Common myeloid progenitor, CD34-positive (primary cell): ENCODE measurements at regions of chr10 and their contacts with region 1.

Region 1: DNA sequence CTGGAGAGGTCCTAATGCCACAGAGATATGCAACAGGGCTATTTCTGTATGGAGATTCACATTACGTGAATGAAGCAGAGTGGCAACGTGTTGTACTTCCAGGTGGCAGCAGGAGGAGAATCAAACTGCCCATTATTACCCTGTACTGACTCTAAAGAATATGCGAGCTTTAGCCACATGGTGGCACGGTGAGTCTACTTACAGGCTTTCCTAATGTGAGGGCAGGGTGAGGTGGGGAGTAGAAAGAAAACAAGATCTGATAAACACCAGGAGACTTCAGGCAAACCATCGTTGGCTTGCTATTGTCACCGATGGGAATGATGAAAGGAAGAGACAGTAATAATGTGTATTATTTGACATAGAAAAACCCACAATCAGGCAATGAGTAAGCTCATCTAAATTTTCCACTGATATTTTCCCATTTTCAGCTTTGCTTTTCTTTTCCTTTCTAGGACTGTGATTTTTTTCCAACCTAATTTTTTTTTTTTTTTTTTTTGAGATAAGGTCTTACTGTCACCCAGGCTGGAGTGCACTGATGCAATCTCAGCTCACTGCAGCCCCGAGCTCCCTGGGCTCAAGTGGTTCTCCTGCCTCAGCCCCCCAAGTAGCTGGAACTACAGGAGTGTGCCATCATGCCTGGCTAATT is 164.3 kb downstream of the BTAF1 start:
- DNase-seq: peak; percentile 87 to 93 (median 93)
- H3K4me3 ChIP-seq: no peak overlapping the region
- H3K27ac ChIP-seq: no peak overlapping the region
- H3K4me1 ChIP-seq: no peaks in the 10 kb centered on the region
- H3K27me3 ChIP-seq: no peaks in the 10 kb centered on the region

Region 2: DNA sequence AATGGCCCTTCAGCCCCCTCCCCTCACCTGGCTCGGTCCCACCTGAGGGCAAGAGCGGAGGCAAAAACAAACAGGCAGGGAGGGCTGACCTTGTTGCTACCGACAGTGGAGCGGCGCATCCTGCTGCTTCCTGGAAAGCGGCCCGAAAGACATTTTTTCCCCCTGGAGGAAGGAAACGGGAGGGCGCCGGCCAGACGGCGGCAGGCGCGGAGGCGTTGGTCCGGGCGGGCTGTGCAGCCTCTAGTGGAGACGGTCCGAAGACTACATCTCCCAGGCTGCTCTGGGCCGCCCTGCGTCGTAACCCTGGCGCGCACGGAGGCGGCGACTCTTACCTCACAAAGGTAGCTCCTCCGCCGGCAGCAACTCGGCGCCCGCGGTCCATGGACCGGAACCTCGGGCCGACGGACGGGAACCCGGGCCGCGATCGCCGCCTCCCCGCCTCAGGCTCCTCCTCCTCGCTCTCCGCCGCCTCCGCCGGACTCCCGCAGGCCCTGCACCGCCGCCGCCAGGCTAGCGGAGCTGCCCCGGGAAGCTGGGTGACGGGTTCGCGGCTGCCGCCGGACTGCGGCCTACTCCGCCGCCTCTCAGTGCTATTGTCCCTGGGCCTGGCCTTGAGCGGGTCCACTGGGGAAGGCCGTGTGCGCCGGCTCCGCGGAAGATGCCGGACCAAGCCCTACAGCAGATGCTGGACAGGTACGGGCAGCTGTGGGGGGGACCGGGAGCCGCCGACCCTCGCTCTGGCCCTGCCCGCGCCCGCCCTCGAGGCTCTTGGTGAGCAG is 203.2 kb after region 1 on chr10 and contains the starts of genes CPEB3 and MARCHF5:
- CTCF ChIA-PET with region 1: interaction called, 47 read pairs
- POLR2A ChIA-PET with region 1: no interaction called
- DNase-seq: peak; percentile 97 to 99 (median 98)
- H3K4me3 ChIP-seq: peak within 1 kb of the TSS; percentile 65 to 99 (median 96)
- H3K27ac ChIP-seq: peak within 1 kb of the TSS; percentile 85 to 91
- H3K4me1 ChIP-seq: peaks cover 5 to 17% (median 15%) of the 10 kb centered on the region in 4 experiments
- H3K27me3 ChIP-seq: no peaks in the 10 kb centered on the region

Region 3: DNA sequence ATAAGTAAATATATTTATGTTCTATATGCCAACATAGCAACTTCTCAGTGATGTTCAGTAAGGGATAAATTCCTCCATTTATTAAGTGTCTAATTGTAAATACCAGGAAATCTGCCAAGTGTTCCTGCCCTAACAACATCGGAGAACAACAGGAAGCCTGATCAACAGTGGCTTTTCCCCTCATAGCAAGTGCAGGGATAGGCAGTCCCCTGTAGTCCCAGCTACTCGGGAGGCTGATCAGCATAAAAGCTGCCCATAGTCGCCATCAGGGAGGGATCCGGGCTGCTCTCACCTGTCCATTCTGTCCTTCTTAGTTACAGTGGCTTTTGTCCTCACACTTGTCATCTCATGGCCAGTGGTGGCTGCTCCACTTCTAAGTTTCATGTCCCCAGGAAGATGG is 344.7 kb after region 1 on chr10:
- CTCF ChIA-PET with region 1: interaction called, 46 read pairs
- POLR2A ChIA-PET with region 1: interaction called, 3 read pairs
- DNase-seq: no peak
- H3K4me3 ChIP-seq: no peak overlapping the region
- H3K27ac ChIP-seq: no peak overlapping the region
- H3K4me1 ChIP-seq: peaks cover 0 to 4% (median 0%) of the 10 kb centered on the region in 4 experiments
- H3K27me3 ChIP-seq: no peaks in the 10 kb centered on the region